Activated CD4-positive, alpha-beta T cell treated with anti-CD3 and anti-CD28 coated beads for 36 hours (primary cell): ENCODE measurements at regions of chr17 and their contacts with region 1.

Region 1: DNA sequence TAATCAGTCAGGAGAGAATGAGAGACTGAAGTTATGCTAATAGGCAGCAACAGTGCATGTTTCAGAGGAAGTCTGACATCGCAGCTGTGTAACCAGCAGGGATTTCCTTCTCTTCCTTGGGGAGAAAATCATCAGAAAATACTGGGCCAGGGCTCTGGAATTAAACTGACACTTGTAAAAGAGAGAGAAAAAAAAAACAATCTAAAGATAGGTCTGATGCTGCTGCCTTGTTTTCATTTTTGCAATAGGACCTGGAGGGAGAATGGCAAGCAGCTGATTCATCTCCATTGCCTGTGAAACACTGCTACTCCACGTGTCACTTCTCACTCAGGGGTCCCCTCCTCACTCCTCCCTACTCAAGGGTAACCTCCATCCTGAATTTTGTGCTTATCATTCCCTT is 17.7 kb upstream of the CORO6 start:
- DNase-seq: no peak
- ATAC-seq: no peak
- H3K4me3 Mint-ChIP-seq: no peak overlapping the region
- H3K27ac Mint-ChIP-seq: peak overlapping the region; percentile 84
- H3K4me1 Mint-ChIP-seq: peaks cover 27% of the 10 kb centered on the region
- H3K27me3 Mint-ChIP-seq: no peaks in the 10 kb centered on the region

Region 2: GRCh38 chr17:28828294-28829040 is 811.9 kb before region 1 on chr17:
- CTCF ChIA-PET with region 1: no interaction called
- POLR2A ChIA-PET with region 1: no interaction called
- intact Hi-C with region 1: no loop called
- DNase-seq: no peak
- ATAC-seq: no peak
- H3K4me3 Mint-ChIP-seq: no peak overlapping the region
- H3K27ac Mint-ChIP-seq: no peak overlapping the region
- H3K4me1 Mint-ChIP-seq: peaks cover 6% of the 10 kb centered on the region
- H3K27me3 Mint-ChIP-seq: no peaks in the 10 kb centered on the region

Region 3: DNA sequence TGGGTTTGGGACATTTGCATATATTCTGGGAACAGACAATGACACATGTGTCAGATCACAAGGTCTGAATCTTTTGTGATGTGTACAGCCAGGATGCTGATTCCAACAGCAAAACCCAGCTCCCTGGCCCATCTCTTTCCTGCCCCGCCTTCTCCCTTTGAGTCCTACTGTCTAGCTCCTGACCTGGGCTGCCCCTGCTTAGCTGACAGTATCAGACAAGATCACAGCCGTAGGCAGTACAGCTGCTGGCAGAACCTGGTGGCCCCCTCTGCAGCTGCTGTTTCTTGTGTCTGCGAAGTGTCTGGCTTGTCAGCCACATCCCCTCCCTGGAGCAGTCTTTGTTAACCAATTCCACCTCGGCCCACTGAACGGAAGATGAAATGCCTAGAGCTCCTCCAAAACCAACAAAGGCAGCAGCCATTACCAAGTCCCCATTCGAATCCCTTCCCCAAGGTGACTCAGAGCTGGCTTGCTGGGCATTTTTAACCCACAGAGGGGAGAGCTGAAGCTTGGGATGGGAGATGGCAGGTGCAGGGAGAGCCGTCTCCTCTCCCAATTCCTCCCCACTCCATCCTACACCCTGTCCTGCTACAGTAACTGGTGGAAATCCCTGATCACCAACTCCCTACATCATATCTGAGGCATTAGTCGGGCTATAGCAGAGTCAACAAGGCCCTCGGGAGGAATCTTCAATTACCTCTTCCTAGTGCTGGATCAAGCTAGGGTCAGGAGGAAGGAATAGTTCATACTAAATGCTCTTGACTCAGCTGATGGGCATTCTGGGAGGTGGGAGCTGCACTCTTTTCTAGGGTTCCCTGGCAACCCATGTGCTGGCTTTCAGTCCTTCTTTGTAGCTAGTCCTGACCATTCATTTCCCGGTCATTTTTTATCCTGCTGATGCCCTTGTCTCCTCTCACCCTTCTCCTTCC is 591.7 kb before region 1 on chr17:
- CTCF ChIA-PET with region 1: no interaction called
- POLR2A ChIA-PET with region 1: no interaction called
- intact Hi-C with region 1: no loop called
- DNase-seq: peak; percentile 14
- ATAC-seq: peak; percentile 36
- H3K4me3 Mint-ChIP-seq: no peak overlapping the region
- H3K27ac Mint-ChIP-seq: no peak overlapping the region
- H3K4me1 Mint-ChIP-seq: peaks cover 6% of the 10 kb centered on the region
- H3K27me3 Mint-ChIP-seq: peaks cover 5% of the 10 kb centered on the region

Region 4: DNA sequence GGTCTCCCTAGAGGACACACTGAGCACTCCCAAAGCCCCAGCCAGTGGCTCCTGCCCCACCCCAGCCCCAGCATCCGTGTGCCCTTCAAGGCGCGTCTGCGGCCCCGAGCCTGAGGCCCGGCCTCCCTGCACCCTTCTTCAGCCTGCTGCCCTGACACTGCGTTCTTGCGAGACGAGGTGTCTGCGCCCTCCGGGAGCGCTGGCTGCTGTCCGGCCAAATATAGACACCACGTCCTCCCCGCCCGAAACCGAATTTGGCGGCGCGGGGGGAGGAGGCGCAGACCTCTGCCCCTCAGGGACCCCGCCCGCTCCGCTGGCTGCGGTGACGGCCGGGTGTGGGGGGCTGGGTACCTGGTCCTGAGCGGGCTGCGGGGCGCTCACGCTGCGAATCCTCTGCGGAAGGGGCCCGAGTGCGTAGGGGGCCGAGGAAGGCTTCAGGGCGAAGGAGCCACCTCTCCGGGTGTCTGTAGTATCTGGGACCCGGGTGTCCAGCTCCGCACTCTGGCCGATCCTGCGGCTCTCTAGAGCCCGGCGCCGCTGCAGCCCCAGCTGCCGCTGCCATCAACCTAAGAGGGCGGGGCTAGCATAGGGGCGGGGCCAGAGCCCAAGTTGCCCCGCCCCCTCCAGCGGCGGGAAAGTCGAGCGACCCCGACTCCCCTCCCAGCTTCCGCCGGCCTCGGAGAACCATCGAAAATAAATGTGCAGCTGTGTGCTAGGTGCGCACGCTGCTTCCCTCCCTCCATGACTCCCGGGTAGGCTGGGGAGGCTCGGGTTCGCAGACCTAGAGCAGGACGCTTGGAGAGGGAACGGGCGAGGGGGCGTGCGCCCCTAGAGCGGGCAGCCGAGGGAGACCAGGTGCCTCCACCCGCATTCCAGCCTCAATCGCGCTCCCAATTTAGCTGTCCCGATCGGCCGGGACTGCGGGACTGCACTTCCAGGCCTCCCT is 17.8 kb before region 1 on chr17 and contains the start of gene CORO6:
- CTCF ChIA-PET with region 1: interaction called, 31 read pairs
- POLR2A ChIA-PET with region 1: interaction called, 3 read pairs
- intact Hi-C with region 1: no loop called
- DNase-seq: peak; percentile 83
- ATAC-seq: peak; percentile 55
- H3K4me3 Mint-ChIP-seq: peak within 1 kb of the TSS; percentile 62
- H3K27ac Mint-ChIP-seq: peak within 1 kb of the TSS; percentile 91
- H3K4me1 Mint-ChIP-seq: peaks cover 52% of the 10 kb centered on the region
- H3K27me3 Mint-ChIP-seq: no peaks in the 10 kb centered on the region
- total RNA-seq, gene CORO6: 13.9 to 14.2 TPM

Region 5: GRCh38 chr17:29653995-29654714 is 13.7 kb after region 1 on chr17:
- CTCF ChIA-PET with region 1: interaction called, 11 read pairs
- POLR2A ChIA-PET with region 1: no interaction called
- intact Hi-C with region 1: no loop called
- DNase-seq: no peak
- ATAC-seq: no peak
- H3K4me3 Mint-ChIP-seq: no peak overlapping the region
- H3K27ac Mint-ChIP-seq: no peak overlapping the region
- H3K4me1 Mint-ChIP-seq: peaks cover 2% of the 10 kb centered on the region
- H3K27me3 Mint-ChIP-seq: no peaks in the 10 kb centered on the region

Region 6: DNA sequence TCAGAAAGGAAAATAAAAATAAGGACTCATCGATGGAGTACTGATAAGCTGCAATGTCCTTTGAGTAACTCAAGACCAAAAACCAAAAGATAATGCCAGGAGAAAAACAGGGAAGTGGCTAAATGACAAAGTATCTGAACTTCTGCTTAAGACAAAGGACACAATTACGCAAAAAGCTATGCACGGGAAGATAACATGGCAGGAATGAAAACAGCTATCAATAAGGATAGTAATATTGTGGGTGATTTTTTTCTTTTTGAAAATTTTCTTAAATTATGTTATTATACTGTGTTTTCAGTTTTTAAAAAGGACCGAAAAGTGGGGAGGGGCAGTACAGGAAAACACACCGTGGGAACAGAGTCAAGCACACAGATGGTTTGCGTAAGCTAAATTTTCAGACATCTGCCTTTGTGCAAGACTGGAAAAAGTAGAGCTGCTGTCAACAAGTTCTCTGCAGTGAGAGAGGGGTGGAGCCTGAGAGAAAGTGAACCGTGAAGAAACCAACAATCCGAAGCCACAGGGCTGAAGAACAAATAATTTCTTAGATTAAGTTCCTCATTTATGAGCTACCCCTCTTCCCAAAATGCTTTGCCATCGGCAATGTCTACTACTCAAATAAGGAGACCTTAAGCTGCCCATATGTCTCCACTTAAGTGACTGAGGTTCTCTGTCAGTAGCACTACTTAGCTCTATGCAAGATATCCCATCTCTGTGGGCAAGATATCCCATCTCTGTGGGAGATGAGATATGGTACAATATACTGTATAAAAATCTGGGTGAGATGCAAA is 82.2 kb after region 1 on chr17:
- CTCF ChIA-PET with region 1: interaction called, 13 read pairs
- POLR2A ChIA-PET with region 1: no interaction called
- intact Hi-C with region 1: no loop called
- DNase-seq: peak; percentile 38
- ATAC-seq: peak; percentile 50
- H3K4me3 Mint-ChIP-seq: peak overlapping the region; percentile 47
- H3K27ac Mint-ChIP-seq: peak overlapping the region; percentile 82
- H3K4me1 Mint-ChIP-seq: peaks cover 78% of the 10 kb centered on the region
- H3K27me3 Mint-ChIP-seq: no peaks in the 10 kb centered on the region

Region 7: GRCh38 chr17:29760761-29761696 is 120.6 kb after region 1 on chr17:
- CTCF ChIA-PET with region 1: interaction called, 14 read pairs
- POLR2A ChIA-PET with region 1: interaction called, 5 read pairs
- intact Hi-C with region 1: loop called in 1 of 2 experiments (anchors 1 kb)
- DNase-seq: peak; percentile 97
- ATAC-seq: peak; percentile 89
- H3K4me3 Mint-ChIP-seq: peak overlapping the region; percentile 97
- H3K27ac Mint-ChIP-seq: peak overlapping the region; percentile 97
- H3K4me1 Mint-ChIP-seq: peaks cover 30% of the 10 kb centered on the region
- H3K27me3 Mint-ChIP-seq: no peaks in the 10 kb centered on the region

Region 8: DNA sequence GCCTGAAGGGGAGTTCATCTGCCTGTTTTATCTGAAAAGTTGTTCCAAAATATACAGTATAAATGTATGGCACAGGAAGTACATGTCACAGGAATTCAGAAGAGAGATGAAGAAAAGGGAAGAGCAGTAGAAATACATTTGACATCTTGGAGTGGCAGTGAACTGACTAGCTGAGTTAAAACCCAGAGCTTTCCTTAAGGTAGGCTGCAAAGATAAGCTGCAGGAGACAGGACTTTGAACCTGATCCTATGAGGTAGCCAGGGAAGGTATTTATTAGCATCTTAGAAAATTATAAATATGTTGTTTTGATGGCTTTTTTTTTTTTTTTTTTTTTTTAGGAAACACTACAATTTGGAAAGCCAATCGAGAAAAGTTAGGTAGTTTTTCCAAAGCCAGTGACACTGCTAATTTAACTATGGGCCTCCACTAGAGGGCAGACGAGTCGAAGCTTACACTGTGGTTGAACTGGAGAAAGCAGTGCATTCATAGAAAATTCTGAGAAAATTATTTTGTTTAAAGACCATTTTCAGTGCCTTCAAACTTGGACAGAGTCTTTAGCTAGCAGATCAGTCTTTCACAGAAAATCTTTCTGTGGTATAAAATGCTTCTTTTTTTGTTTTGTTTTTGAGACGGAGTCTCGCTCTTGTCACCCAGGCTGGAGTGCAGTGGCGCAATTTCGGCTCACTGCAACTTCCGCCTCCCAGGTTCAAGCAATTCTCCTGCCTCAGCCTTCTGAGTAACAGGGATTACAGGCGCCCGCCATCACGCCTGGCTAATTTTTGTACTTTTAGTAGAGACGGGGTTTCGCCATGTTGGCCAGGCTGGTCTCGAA is 167.3 kb after region 1 on chr17:
- CTCF ChIA-PET with region 1: interaction called, 41 read pairs
- POLR2A ChIA-PET with region 1: interaction called, 3 read pairs
- intact Hi-C with region 1: loop called in 1 of 2 experiments (anchors 1 kb)
- DNase-seq: peak; percentile 83
- ATAC-seq: peak; percentile 74
- H3K4me3 Mint-ChIP-seq: no peak overlapping the region
- H3K27ac Mint-ChIP-seq: no peak overlapping the region
- H3K4me1 Mint-ChIP-seq: peaks cover 15% of the 10 kb centered on the region
- H3K27me3 Mint-ChIP-seq: no peaks in the 10 kb centered on the region